Sciatic nerve (tissue), 2 donors: ENCODE measurements at regions of chr17 and their contacts with region 1.

Region 1: GRCh38 chr17:37702605-37703004 is 42.3 kb downstream of the HNF1B start:
- DNase-seq: no peak
- ATAC-seq: no peak

Region 2: DNA sequence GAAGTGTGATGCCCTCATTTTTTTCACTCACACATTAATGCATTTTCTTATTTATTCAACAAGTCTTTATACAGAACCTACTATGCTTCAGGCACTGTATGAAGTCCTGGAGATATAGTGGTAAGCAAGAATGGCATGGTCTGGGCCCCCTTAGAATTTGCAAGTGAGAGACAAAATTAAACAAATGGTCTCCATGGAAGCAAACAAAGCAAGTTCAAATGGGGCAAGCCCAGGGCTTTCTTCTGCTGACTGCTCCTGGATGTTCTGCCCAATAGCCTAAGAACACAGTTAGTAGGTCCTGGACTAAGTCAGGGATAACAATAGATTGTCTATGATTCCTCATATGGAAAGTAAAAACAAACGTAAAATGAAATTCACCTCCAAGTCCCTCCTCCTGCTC is 28.1 kb before region 1 on chr17:
- intact Hi-C with region 1: loop called (anchors 2 kb)
- DNase-seq: no peak
- ATAC-seq: no peak